HepG2 (cell line): ENCODE measurements at regions of chr3 and their contacts with region 1.

Region 1: DNA sequence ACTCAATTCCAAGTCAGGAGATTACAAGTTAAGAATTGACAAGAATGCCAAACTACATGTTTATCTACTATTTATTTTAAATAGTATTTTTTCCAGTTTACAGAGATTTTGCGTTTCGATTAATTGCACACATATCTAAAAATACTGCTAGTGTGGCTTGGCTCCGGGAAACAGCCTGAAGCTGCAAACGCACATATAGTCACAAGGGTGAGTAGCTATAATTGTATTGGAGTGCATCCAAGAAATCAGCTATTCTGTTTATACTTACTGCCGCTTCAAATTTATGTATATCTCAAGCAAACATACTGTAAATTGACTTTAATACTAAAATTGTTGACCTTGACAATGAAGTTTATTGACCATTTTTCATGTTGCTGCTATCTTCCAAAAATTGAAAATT is 77.0 kb upstream of the PLSCR5 start:
- DNase-seq: no peak
- ATAC-seq: no peak
- H3K4me3 ChIP-seq: no peak overlapping the region
- H3K27ac ChIP-seq: no peak overlapping the region
- H3K4me1 ChIP-seq: no peaks in the 10 kb centered on the region
- H3K27me3 ChIP-seq: no peaks in the 10 kb centered on the region
- CTCF ChIP-seq: no peak
- EP300 ChIP-seq: no peak
- POLR2A ChIP-seq: no peak
- RAD21 ChIP-seq: no peak

Region 2: GRCh38 chr3:146664403-146664802 is 17.8 kb before region 1 on chr3:
- CTCF ChIA-PET with region 1: no interaction called
- POLR2A ChIA-PET with region 1: no interaction called
- in situ Hi-C with region 1: no loop called
- intact Hi-C with region 1: loop called (anchors 1 kb)
- DNase-seq: no peak
- ATAC-seq: no peak
- H3K4me3 ChIP-seq: no peak overlapping the region
- H3K27ac ChIP-seq: no peak overlapping the region
- H3K4me1 ChIP-seq: no peaks in the 10 kb centered on the region
- H3K27me3 ChIP-seq: no peaks in the 10 kb centered on the region; a peak in 1 of 5 replicates
- CTCF ChIP-seq: no peak
- EP300 ChIP-seq: no peak
- POLR2A ChIP-seq: no peak
- RAD21 ChIP-seq: no peak